Activated naive CD4-positive, alpha-beta T cell treated with anti-CD3 and anti-CD28 coated beads for 36 hours (primary cell): ENCODE measurements at regions of chr1 and their contacts with region 1.

Region 1: DNA sequence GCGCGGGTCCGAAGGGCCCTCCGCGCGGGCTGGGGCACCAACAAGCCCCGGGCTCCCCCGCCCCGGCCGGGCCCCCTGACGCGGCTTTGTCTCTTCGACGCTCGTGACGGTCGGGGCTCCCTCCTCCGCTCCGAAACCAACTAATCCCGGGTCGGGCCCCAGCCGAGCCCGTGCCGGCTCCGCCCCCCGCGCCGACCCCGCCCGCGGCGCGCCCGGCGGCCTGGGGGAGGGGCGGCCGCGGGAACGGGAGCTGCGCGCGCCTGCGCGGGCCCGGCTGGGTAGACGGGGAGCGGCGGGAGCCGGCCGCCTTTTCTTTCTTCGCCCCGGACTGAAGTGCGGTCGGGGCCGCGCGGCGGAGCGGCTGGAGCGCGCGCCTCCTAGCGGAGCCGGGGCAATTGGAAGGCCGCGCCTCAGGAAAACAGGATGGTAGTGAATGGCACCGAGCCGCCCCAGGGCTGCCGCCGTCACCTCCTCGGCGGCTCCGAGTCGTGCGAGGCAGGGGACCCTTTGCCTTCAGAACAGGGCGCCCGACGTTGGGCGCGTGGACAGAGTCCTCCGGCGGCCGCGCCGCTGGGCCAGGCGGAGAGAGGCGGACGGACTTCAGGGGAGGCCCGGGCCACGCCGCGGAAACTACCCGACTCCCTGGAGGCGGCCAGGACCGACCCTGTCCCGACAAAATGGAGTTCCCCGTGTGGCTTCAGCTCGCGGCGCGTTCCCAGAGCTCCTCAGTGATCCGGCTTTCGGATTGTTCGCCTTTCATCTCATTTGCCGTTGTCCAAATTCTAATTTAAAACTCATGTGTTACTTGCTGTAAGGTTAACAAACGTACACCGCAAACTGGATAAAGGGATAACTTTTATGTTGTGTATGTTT is at the start of gene TP53BP2:
- DNase-seq: peak; percentile 85
- H3K4me3 Mint-ChIP-seq: peak within 1 kb of the TSS; percentile 93
- H3K27ac Mint-ChIP-seq: peak within 1 kb of the TSS; percentile 97
- H3K4me1 Mint-ChIP-seq: peaks cover 41% of the 10 kb centered on the region
- H3K27me3 Mint-ChIP-seq: no peaks in the 10 kb centered on the region
- total RNA-seq, gene TP53BP2: 40.8 to 44.2 TPM

Region 2: GRCh38 chr1:223189903-223190724 is 655.9 kb before region 1 on chr1:
- CTCF ChIA-PET with region 1: no interaction called
- intact Hi-C with region 1: loop called (anchors 5 kb)
- DNase-seq: peak; percentile 76
- H3K4me3 Mint-ChIP-seq: no peak overlapping the region
- H3K27ac Mint-ChIP-seq: peak overlapping the region; percentile 67
- H3K4me1 Mint-ChIP-seq: peaks cover 41% of the 10 kb centered on the region
- H3K27me3 Mint-ChIP-seq: peaks cover 9% of the 10 kb centered on the region

Region 3: DNA sequence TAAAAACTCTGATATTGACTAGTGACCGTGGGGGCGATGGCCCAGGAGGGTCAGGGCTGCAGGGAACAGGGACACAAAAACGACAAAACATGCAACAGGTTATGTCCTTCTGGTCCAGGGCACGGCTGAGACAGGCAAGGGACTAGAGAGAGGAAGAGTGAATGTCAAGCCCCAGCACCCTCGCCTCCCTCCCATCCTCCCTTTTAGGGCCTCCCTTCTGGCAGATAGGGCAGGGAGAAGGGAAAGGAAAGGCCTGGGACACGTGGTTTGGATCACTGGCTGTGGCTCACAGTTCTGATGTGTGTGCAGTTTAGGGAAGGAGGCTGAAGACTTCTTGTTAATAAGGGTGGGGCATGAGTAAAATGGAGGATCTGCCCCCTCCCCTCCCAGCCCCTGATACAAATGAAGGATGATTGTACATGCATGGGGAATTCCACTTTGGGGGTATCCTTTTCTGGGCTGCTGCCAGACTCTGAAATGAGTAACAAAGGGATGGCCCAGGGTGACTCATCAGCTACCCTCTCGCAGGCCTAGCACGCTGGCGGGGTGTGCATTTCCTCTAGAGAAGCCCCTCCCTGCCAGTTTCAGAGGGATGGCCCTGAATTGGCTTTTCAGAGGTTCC is 119.6 kb before region 1 on chr1:
- CTCF ChIA-PET with region 1: no interaction called
- intact Hi-C with region 1: loop called (anchors 1 kb)
- DNase-seq: peak; percentile 98
- H3K4me3 Mint-ChIP-seq: peak overlapping the region; percentile 52
- H3K27ac Mint-ChIP-seq: peak overlapping the region; percentile 65
- H3K4me1 Mint-ChIP-seq: peaks cover 57% of the 10 kb centered on the region
- H3K27me3 Mint-ChIP-seq: no peaks in the 10 kb centered on the region

Region 4: DNA sequence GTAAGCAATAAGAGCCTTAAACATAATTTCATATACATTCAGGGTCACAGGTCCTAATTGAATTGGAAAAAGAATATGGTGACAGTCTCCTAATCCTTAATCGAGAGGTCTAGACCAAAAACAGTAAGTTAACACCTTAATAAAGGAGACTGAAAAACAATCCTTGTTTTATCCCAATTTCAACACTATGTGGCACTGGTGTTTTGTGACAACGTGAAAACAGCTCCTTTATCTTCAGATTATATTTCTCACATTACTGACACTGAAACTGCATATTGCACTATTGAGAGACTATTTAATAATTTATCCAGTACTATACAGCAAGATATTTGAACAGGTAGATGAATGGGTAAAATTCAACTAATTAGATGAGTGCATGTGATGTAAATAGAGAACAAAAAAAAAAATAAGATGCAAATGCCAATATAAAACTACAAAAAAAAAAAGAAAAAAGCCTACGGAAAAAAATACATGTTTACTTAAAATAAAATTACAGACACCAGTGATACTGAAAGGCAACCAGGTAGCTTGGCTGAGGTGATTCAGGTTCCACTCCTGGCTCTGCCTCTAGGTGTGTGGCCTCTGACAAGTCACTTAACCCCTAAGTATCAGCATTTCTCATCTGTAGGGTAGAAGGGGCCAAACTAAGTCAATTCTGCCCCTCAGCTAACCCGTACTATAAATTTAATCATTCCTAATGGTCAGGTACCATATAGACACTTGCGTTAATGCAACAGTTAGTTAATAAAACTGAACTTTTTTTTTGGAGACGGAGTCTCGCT is 34.2 kb before region 1 on chr1:
- CTCF ChIA-PET with region 1: interaction called, 15 read pairs
- intact Hi-C with region 1: loop called (anchors 1 kb)
- DNase-seq: no peak
- H3K4me3 Mint-ChIP-seq: no peak overlapping the region
- H3K27ac Mint-ChIP-seq: no peak overlapping the region
- H3K4me1 Mint-ChIP-seq: peaks cover 33% of the 10 kb centered on the region
- H3K27me3 Mint-ChIP-seq: no peaks in the 10 kb centered on the region

Region 5: DNA sequence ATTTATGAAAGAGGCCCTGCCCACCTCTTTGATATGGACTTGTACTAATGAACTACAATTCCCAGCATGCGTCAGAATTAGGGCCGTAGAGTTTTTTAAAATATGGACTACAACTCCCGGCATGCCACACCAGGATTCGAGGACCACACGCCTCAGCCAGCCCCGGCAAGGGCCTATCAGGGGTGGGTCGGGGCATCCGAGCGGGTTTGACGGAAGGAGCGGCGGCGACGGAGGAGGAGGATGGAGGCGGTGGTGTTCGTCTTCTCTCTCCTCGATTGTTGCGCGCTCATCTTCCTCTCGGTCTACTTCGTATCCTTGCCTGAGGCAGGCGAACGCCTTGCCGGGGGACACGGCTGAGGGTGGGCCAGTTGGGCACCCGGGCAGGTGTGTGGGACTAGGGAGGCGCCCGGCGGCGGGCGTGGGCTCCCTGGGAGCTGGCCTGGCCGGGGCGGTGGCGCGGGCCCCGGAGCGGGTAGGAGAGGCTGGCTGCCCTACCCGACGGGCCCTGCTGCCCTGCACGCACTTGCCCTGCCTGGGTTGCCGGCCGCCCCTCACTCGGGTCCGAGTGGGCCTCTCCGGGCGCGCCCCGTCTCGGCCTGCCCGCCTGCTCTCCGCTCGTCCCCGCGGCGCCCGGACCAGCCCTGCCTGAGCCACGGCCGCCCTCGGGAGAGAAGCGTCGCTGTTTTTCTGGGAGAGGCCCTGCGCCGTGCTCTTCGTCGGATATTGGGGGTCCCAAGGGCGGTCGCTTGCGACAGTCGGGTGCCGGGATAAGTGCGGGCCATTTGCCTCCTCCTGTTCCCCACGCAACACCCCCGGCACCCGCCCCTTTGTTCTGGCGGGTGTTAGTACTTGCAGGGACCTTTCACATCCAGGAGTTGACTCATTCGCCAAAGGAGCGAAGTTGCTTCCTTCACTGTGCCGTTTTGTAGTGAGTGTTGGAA is 510.9 kb after region 1 on chr1 and contains the start of gene CNIH4:
- CTCF ChIA-PET with region 1: no interaction called
- intact Hi-C with region 1: loop called (anchors 2 kb)
- DNase-seq: peak; percentile 94
- H3K4me3 Mint-ChIP-seq: peak within 1 kb of the TSS; percentile 89
- H3K27ac Mint-ChIP-seq: peak within 1 kb of the TSS; percentile 86
- H3K4me1 Mint-ChIP-seq: peaks cover 31% of the 10 kb centered on the region
- H3K27me3 Mint-ChIP-seq: no peaks in the 10 kb centered on the region
- total RNA-seq, gene CNIH4: 34.7 to 35.1 TPM

Region 6: DNA sequence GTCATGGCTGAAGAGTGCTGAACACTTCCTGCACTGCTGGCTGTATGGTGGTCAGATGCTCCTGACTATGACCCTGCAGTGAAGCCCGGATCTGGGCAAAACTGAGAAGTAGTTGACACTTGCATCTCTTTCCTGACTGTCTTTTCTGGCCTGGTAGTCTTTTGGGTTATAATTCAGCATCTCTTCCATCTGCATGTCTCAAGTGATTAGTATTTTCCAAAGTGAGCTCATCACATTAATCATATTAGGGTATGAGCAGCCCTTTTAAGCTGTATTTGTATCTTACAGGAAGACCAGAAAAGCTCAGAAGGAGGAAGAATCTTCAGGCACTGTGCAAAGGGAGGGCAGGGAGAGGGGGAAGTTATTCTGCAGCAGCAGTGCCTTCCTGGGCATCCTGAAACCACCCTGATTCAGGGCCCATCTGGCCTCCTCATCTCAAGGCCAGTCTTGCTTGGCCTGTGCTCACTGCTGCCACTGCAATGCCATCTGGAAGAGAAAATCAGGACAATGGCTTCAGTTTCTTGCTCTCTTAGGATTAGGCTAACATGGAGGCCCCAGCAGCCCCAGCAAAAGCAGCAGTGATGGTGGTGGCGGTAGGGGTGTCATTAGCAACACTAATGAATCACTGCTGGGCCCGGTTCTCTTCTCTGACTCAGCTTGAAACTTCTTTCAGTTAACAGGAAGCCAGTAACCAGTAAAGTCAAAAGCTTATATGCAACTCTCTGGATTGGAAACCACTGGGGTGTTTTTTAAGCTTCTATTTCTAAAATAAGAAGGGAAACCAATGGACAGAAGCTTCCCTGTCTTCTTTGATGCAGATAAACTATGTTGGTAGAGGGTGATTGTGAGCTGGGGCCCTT is 651.9 kb after region 1 on chr1:
- CTCF ChIA-PET with region 1: no interaction called
- intact Hi-C with region 1: loop called (anchors 5 kb)
- DNase-seq: peak; percentile 91
- H3K4me3 Mint-ChIP-seq: peak overlapping the region; percentile 54
- H3K27ac Mint-ChIP-seq: peak overlapping the region; percentile 92
- H3K4me1 Mint-ChIP-seq: peaks cover 40% of the 10 kb centered on the region
- H3K27me3 Mint-ChIP-seq: peaks cover 7% of the 10 kb centered on the region